ENCODE measurements at regions of chr4 and their contacts with region 1.

Region 1: DNA sequence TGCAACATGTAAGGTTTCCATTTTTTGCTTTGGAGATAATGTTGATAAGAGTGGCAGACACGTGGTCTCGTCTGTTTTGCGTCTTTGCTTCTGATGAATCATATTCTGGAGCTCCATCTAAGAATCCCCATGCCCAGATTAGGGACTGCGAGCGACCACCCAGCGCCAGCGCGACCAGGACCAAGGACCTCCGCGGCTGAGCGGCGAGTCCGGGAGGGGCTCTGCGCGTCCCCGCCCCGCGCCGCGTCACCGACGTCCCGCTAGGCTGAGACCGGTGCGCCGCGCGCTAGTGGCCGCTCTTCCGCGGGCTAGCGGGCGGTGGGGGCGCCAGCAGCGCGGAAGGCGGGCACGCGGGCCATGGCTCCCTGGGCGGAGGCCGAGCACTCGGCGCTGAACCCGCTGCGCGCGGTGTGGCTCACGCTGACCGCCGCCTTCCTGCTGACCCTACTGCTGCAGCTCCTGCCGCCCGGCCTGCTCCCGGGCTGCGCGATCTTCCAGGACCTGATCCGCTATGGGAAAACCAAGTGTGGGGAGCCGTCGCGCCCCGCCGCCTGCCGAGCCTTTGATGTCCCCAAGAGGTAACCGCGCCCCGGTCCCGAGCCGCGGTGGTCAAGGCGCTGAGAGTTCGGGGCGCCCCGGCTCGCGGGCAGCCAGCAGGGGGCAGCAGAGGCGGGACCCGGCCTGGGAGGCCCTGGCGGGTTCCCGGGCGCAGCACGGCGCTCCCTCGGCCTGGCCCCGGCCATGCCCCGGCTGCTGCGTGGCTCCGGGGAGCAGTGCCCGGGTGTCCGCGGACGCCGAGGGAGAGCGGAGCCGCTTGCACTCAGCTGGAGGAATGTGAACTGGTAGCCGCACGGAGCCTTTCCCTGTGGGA is at the start of gene SRD5A3:
- DNase-seq: peak; percentile 75 to 83 (median 77)
- H3K4me3 ChIP-seq: peak within 1 kb of the TSS; percentile 70 to 93 (median 77)
- H3K27ac ChIP-seq: peak within 1 kb of the TSS; percentile 58 to 87
- H3K4me1 ChIP-seq: peaks cover 0 to 28% (median 23%) of the 10 kb centered on the region in 4 experiments
- H3K27me3 ChIP-seq: no peaks in the 10 kb centered on the region

Region 2: GRCh38 chr4:55154290-55154880 is 191.8 kb before region 1 on chr4:
- CTCF ChIA-PET with region 1: no interaction called
- POLR2A ChIA-PET with region 1: no interaction called
- DNase-seq: no peak
- H3K4me3 ChIP-seq: no peak overlapping the region
- H3K27ac ChIP-seq: no peak overlapping the region
- H3K4me1 ChIP-seq: peaks cover 0 to 8% (median 2%) of the 10 kb centered on the region in 4 experiments
- H3K27me3 ChIP-seq: peaks cover 0 to 32% (median 23%) of the 10 kb centered on the region in 5 experiments

Region 3: GRCh38 chr4:55395529-55396307 is 49.5 kb after region 1 on chr4 and contains the start of gene TMEM165:
- CTCF ChIA-PET with region 1: interaction called, 13 read pairs
- POLR2A ChIA-PET with region 1: interaction called, 4 read pairs
- DNase-seq: peak; percentile 93 to 95 (median 94)
- H3K4me3 ChIP-seq: peak within 1 kb of the TSS; percentile 88 to 99 (median 94)
- H3K27ac ChIP-seq: peak within 1 kb of the TSS; percentile 68 to 89
- H3K4me1 ChIP-seq: peaks cover 27 to 40% (median 30%) of the 10 kb centered on the region in 4 experiments
- H3K27me3 ChIP-seq: no peaks in the 10 kb centered on the region

Region 4: GRCh38 chr4:55444827-55445226 is 98.6 kb after region 1 on chr4:
- CTCF ChIA-PET with region 1: interaction called, 12 read pairs
- POLR2A ChIA-PET with region 1: no interaction called
- DNase-seq: peak; percentile 8 to 33 (median 21)
- H3K4me3 ChIP-seq: no peak overlapping the region
- H3K27ac ChIP-seq: no peak overlapping the region
- H3K4me1 ChIP-seq: peaks cover 0 to 25% (median 7%) of the 10 kb centered on the region in 4 experiments
- H3K27me3 ChIP-seq: no peaks in the 10 kb centered on the region

Measured in common myeloid progenitor, CD34-positive (primary cell).